MCF 10A (cell line): ENCODE measurements at regions of chr11 and their contacts with region 1.

Region 1: DNA sequence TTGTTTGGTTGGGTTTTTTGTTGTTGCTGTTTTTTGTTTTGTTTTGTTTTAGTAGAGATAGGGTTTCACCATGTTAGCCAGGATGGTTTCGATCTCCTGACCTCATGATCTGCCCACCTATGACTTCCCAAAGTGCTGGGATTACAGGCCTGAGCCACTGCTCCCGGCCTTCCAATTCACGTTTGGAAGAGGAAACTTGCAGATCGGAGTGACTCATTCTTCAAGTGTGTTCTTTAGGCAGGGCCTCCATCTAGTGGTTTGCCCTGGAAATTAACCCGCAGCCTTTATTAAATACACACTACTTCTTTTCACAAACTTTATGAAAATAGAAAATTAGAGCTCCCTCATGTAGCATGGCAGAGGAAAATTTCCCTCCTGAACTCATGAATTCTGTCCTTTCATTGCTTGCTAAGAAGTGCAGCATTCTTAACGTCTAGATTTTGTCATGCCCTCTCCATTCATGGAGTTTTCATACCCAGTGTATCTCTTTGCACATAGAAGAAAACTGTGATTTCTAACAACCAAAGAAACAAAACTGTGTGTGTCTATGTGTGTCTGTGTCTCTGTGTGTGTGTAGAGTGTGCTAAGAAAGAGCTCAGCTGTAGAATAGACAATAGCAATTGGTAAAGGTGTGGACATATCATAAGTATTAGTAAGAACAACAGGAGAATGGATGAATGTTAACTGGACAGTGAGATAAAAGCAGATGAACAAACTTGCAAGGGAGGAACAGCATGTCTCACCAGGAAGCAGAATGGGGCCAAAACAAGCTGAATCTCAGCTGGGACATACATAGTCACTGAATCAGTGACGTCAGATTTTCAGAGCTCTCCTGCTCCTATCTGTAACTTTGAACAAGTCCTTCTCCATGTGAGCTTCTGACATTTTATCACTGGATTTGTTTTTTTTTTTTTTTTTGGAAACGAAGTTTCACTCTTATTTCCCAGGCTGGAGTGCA is 118.4 kb downstream of the BBOX1 start:
- DNase-seq: peak; percentile 80
- H3K4me3 Mint-ChIP-seq: no peak overlapping the region
- H3K27ac Mint-ChIP-seq: no peak overlapping the region
- H3K4me1 Mint-ChIP-seq: peaks cover 11% of the 10 kb centered on the region
- H3K27me3 Mint-ChIP-seq: no peaks in the 10 kb centered on the region
- CTCF ChIP-seq: peak; percentile 84

Region 2: DNA sequence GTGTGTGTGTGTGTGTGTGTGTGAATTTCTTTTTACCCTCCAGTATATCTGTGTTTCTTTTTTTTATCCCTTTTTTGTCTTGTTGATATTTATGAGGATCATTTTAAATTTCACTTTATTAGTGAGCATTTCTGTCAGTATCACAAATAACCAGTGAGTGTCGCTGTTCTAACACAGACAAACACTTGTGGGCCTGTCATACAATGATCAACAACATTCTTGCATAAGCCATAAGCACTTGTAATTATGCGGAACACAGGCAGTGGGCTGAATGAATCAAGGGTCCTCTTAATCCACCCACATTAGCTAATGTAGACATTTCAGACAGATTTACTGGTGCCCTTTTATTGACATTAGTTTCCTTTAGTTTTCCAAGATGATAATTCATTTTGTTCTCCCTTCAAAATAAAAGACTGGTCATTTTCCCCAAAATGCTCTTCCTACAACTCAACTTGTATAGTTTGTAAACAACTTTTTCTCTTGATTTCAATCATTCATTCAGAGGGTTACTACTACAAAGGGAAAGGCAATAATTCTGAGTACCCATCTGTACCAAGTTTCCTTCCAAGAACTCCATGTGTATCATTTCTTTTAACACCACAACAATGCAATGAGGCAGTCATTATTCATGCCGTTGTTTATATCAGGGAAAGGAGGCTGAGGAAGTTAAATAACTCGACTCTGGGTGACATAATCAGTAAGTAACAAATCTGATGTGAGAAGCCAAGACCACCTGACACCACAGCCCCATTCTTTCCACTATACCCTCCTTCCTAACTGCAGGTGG is 861.6 kb before region 1 on chr11:
- CTCF ChIA-PET with region 1: interaction called, 39 read pairs
- POLR2A ChIA-PET with region 1: no interaction called
- intact Hi-C with region 1: loop called (anchors 1 kb)
- DNase-seq: peak; percentile 64
- H3K4me3 Mint-ChIP-seq: no peak overlapping the region
- H3K27ac Mint-ChIP-seq: peak overlapping the region; percentile 52
- H3K4me1 Mint-ChIP-seq: no peaks in the 10 kb centered on the region
- H3K27me3 Mint-ChIP-seq: peaks cover 16% of the 10 kb centered on the region
- CTCF ChIP-seq: peak; percentile 50

Region 3: GRCh38 chr11:26649884-26650283 is 509.1 kb before region 1 on chr11:
- CTCF ChIA-PET with region 1: interaction called, 5 read pairs
- POLR2A ChIA-PET with region 1: no interaction called
- intact Hi-C with region 1: loop called (anchors 10 kb)
- DNase-seq: peak; percentile 84
- H3K4me3 Mint-ChIP-seq: no peak overlapping the region
- H3K27ac Mint-ChIP-seq: no peak overlapping the region
- H3K4me1 Mint-ChIP-seq: no peaks in the 10 kb centered on the region
- H3K27me3 Mint-ChIP-seq: peaks cover 11% of the 10 kb centered on the region
- CTCF ChIP-seq: peak; percentile 69

Region 4: GRCh38 chr11:26761361-26761809 is 397.6 kb before region 1 on chr11:
- CTCF ChIA-PET with region 1: interaction called, 62 read pairs
- POLR2A ChIA-PET with region 1: no interaction called
- intact Hi-C with region 1: no loop called
- DNase-seq: no peak
- H3K4me3 Mint-ChIP-seq: no peak overlapping the region
- H3K27ac Mint-ChIP-seq: no peak overlapping the region
- H3K4me1 Mint-ChIP-seq: no peaks in the 10 kb centered on the region
- H3K27me3 Mint-ChIP-seq: no peaks in the 10 kb centered on the region
- CTCF ChIP-seq: no peak

Region 5: DNA sequence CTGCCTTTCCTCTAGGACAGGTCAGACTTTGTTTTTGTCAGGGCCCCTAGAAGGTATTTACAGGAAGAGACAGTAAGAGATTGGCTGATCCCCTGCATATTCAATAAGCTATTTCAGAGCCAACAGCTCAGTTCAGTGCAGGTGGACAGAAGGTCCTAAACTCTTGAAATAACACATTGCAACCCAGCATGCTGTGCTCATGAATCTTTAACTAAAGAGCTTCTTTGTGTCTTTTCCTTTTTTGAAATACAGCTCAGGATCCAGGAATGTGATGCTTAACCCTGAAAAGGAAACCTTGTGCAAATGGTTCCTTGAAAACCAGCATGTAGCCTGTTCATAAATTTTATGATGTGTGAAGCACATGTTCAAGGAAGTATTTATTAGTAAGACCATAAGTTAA is 74.5 kb before region 1 on chr11:
- CTCF ChIA-PET with region 1: interaction called, 11 read pairs
- POLR2A ChIA-PET with region 1: no interaction called
- intact Hi-C with region 1: no loop called
- DNase-seq: no peak
- H3K4me3 Mint-ChIP-seq: no peak overlapping the region
- H3K27ac Mint-ChIP-seq: no peak overlapping the region
- H3K4me1 Mint-ChIP-seq: peaks cover 32% of the 10 kb centered on the region
- H3K27me3 Mint-ChIP-seq: no peaks in the 10 kb centered on the region
- CTCF ChIP-seq: no peak

Region 6: DNA sequence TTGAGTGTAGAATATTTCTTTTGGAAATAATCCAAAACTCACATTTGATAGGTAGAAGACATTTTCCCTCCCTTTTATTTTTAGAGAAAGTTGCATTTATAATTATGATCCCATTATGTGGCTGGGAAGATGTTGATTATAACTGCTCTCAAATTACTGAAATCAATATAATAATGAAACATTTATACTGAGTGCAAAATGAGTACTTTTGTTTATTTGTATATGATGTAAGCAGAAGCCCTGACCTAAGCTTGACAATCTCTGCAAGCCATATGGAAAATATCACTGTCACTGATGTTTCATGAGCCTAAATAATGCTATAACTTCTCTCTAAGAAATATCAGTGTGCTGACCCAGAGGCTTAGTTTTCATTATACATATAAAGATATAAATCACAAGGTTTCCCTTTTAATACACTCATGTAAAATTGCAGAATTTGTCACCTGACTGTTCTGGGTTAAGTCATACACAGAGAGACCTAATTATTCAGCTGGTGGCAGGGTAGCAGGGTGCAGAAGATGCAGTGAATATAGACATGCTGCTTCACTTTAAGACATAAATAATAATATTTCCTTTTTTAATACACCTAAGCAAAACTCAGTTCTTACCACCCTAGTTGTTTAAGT is 19.1 kb before region 1 on chr11:
- CTCF ChIA-PET with region 1: interaction called, 10 read pairs
- POLR2A ChIA-PET with region 1: no interaction called
- intact Hi-C with region 1: no loop called
- DNase-seq: no peak
- H3K4me3 Mint-ChIP-seq: no peak overlapping the region
- H3K27ac Mint-ChIP-seq: no peak overlapping the region
- H3K4me1 Mint-ChIP-seq: peaks cover 5% of the 10 kb centered on the region
- H3K27me3 Mint-ChIP-seq: no peaks in the 10 kb centered on the region
- CTCF ChIP-seq: no peak

Region 7: DNA sequence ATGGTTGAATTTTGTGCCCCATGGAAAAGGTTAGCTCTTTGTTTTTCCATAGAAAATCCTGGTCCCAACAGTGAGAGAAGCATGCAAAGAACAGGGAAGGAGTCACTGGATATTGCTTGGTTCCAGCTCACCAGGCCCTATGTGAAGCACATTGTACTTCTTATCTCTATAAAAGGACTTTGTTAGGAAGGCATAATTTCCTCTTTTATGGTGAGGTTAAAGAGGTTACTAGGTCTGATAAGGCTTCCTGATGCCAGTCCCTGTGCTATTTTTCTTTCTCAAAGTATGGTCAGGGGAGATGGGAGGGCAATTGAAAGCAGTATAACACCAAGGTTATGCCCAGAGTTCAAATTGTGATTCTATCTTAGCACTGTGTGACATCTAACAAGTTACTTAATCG is 786.3 kb after region 1 on chr11:
- CTCF ChIA-PET with region 1: no interaction called
- POLR2A ChIA-PET with region 1: no interaction called
- intact Hi-C with region 1: no loop called
- DNase-seq: no peak
- H3K4me3 Mint-ChIP-seq: no peak overlapping the region
- H3K27ac Mint-ChIP-seq: no peak overlapping the region
- H3K4me1 Mint-ChIP-seq: no peaks in the 10 kb centered on the region
- H3K27me3 Mint-ChIP-seq: no peaks in the 10 kb centered on the region
- CTCF ChIP-seq: no peak